ENCODE measurements at regions of chr11 and their contacts with region 1.

Region 1: DNA sequence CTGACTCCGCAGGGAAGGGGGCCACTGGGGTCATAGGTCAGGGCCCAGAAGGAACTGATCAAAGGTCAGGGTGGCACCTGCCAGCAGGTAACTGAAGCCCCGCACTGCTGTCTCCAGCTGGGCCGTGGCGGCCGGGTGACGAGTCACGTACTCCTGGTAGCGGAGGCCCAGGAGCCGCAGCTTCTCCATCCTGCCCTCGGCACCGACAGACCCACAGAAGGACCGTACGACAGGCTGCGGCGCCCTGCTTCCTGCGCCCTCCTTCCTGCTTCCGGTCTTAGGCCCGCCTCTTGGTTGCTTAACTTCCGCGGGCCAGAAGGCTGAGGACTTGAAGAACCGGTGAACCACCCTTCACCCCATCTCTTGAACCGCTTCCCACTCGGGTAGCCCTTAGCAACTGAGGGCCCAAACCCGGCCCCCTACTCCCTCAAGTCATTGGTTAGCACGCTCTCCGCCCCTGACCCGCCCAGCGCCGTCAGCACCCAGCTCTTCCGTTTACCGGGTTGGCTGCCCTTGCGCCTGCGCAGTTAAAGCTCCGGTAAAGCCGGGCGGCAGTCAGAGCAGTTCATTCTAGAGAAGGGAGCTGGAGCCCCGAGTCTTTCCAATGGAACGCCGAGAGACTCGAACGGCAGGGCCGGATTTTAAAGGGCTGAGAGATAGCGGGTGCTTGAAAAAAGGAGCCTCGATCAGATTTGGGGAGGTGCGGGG is at the start of gene PEX16:
- DNase-seq: peak; percentile 88 to 93
- H3K4me3 ChIP-seq: peak within 1 kb of the TSS; percentile 84 to 90 (median 88)
- H3K27ac ChIP-seq: peak within 1 kb of the TSS; percentile 64; the same call in 1 of the 2 replicates
- H3K4me1 ChIP-seq: peaks cover 12 to 28% (median 20%) of the 10 kb centered on the region in 4 experiments
- H3K27me3 ChIP-seq: peaks cover 0 to 9% (median 0%) of the 10 kb centered on the region in 4 experiments; a peak in 3 of 7 replicates
- CTCF ChIP-seq: no peak
- EP300 ChIP-seq: peak in 1 of 2 experiments; percentile 5; a peak in 1 of 3 replicates
- POLR2A ChIP-seq: peak in 1 of 2 experiments; percentile 63; a peak in 2 of 3 replicates
- RAD21 ChIP-seq: no peak
- total RNA-seq, gene PEX16: 29.2 and 29.4 TPM in 2 replicates

Region 2: GRCh38 chr11:45848654-45849081 is 69.1 kb before region 1 on chr11:
- CTCF ChIA-PET with region 1: no interaction called
- POLR2A ChIA-PET with region 1: no interaction called
- DNase-seq: no peak
- H3K4me3 ChIP-seq: peak overlapping the region in 2 of 4 experiments; percentile 58 to 90; a peak in 4 of 8 replicates
- H3K27ac ChIP-seq: no peak overlapping the region
- H3K4me1 ChIP-seq: peaks cover 2 to 24% (median 10%) of the 10 kb centered on the region in 4 experiments; a peak in 6 of 7 replicates
- H3K27me3 ChIP-seq: peaks cover 5 to 25% (median 12%) of the 10 kb centered on the region in 4 experiments; a peak in 6 of 7 replicates
- CTCF ChIP-seq: no peak
- EP300 ChIP-seq: no peak
- POLR2A ChIP-seq: no peak
- RAD21 ChIP-seq: no peak

Region 3: DNA sequence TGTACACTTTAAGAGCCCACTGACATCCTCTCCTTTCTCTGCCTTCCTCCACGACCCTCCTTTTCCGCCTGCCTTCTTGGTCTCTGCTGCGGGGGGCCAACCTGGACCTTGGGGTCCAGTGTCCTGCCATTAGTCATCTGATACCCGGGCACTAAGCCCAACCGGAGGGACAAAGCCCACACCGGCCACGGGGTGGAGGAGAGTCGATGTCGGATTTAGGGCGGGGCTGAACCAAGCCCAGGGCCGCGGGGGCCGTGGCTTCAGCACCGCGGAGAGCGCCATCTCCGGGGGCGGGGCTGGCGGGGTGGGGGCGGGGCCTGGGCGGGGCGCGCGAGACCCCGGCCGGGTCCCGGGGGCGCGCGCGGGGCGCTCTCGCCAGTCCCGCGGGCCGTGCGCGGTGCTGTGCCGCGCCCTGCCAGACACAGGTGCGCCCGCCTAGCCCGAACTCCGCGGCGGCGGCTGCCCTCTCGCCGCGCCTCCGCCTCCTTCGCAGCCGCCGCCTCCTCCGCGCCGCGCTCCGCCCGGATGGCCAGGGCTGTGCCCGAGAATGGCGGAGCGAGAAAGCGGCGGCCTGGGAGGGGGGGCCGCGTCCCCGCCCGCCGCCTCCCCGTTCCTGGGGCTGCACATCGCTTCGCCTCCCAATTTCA is 32.4 kb before region 1 on chr11 and contains the start of gene MAPK8IP1:
- CTCF ChIA-PET with region 1: interaction called, 5 read pairs
- POLR2A ChIA-PET with region 1: interaction called, 14 read pairs
- DNase-seq: peak; percentile 17 to 82
- H3K4me3 ChIP-seq: peak within 1 kb of the TSS; percentile 58 to 83 (median 71)
- H3K27ac ChIP-seq: no peak within 1 kb of the TSS
- H3K4me1 ChIP-seq: peaks cover 0 to 10% (median 5%) of the 10 kb centered on the region in 4 experiments; a peak in 5 of 7 replicates
- H3K27me3 ChIP-seq: no peaks in the 10 kb centered on the region; a peak in 2 of 7 replicates
- CTCF ChIP-seq: no peak; a peak in 1 of 4 replicates
- EP300 ChIP-seq: no peak
- POLR2A ChIP-seq: no peak
- RAD21 ChIP-seq: no peak; a peak in 1 of 4 replicates
- total RNA-seq, gene MAPK8IP1: 40.1 and 41.7 TPM in 2 replicates

Region 4: GRCh38 chr11:45899448-45900173 is 18.2 kb before region 1 on chr11:
- CTCF ChIA-PET with region 1: interaction called, 7 read pairs
- POLR2A ChIA-PET with region 1: interaction called, 36 read pairs
- DNase-seq: peak; percentile 72 to 90
- H3K4me3 ChIP-seq: peak overlapping the region; percentile 50 to 66 (median 59); a peak in 7 of 8 replicates
- H3K27ac ChIP-seq: peak overlapping the region; percentile 81; the same call in 1 of the 2 replicates
- H3K4me1 ChIP-seq: peaks cover 0 to 28% (median 19%) of the 10 kb centered on the region in 4 experiments; a peak in 5 of 7 replicates
- H3K27me3 ChIP-seq: peaks cover 0 to 5% (median 2%) of the 10 kb centered on the region in 4 experiments; a peak in 1 of 7 replicates
- CTCF ChIP-seq: no peak
- EP300 ChIP-seq: peak in 1 of 2 experiments; percentile 98; a peak in 1 of 3 replicates
- POLR2A ChIP-seq: no peak
- RAD21 ChIP-seq: peak in 1 of 2 experiments; percentile 26; a peak in 2 of 4 replicates

Region 5: DNA sequence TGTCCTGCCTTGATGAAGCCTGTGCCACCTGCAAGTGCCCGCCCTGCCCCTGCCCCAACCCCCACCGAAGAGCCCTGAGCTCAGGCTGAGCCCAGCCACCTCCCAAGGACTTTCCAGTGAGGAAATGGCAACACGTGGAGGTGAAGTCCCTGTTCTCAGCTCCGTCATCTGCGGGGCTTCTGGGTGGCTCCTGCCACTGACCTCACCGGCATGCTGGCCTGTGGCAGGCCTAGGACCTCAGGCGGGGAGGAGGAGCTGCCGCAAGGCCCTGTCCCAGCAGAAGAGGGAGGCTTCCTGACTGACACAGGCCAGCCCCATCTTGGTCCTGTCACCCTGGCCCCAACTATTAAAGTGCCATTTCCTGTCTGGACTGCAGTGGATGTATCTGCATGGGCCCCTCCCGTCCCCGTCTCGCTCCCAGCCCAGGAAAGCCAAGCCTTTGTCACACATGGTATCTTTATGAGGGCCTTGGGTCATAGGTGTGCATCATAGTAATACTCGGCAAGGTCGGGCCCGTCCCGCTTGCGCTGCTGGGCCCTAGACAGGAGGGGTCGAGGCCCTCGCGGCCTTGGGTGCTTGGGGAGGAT is 11.6 kb before region 1 on chr11:
- CTCF ChIA-PET with region 1: no interaction called
- POLR2A ChIA-PET with region 1: interaction called, 36 read pairs
- DNase-seq: no peak
- H3K4me3 ChIP-seq: no peak overlapping the region
- H3K27ac ChIP-seq: no peak overlapping the region
- H3K4me1 ChIP-seq: peaks cover 0 to under 1% (median 0%) of the 10 kb centered on the region in 4 experiments; a peak in 1 of 7 replicates
- H3K27me3 ChIP-seq: no peaks in the 10 kb centered on the region
- CTCF ChIP-seq: no peak
- EP300 ChIP-seq: no peak
- POLR2A ChIP-seq: no peak
- RAD21 ChIP-seq: no peak

Region 6: GRCh38 chr11:45930031-45930794 is 12.4 kb after region 1 on chr11:
- CTCF ChIA-PET with region 1: interaction called, 4 read pairs
- POLR2A ChIA-PET with region 1: interaction called, 115 read pairs
- DNase-seq: no peak
- H3K4me3 ChIP-seq: no peak overlapping the region
- H3K27ac ChIP-seq: no peak overlapping the region
- H3K4me1 ChIP-seq: no peaks in the 10 kb centered on the region
- H3K27me3 ChIP-seq: no peaks in the 10 kb centered on the region
- CTCF ChIP-seq: no peak
- EP300 ChIP-seq: no peak
- POLR2A ChIP-seq: no peak
- RAD21 ChIP-seq: peak; percentile 6 to 35; a peak in 2 of 4 replicates

Region 7: GRCh38 chr11:45982656-45983470 is 65.1 kb after region 1 on chr11:
- CTCF ChIA-PET with region 1: no interaction called
- POLR2A ChIA-PET with region 1: interaction called, 12 read pairs
- DNase-seq: peak; percentile 60 to 84
- H3K4me3 ChIP-seq: peak overlapping the region in 1 of 4 experiments; percentile 40; a peak in 4 of 8 replicates
- H3K27ac ChIP-seq: peak overlapping the region; percentile 58; the same call in 1 of the 2 replicates
- H3K4me1 ChIP-seq: peaks cover 5 to 9% (median 9%) of the 10 kb centered on the region in 4 experiments; a peak in 5 of 7 replicates
- H3K27me3 ChIP-seq: no peaks in the 10 kb centered on the region
- CTCF ChIP-seq: no peak
- EP300 ChIP-seq: no peak
- POLR2A ChIP-seq: no peak
- RAD21 ChIP-seq: no peak

Region 8: DNA sequence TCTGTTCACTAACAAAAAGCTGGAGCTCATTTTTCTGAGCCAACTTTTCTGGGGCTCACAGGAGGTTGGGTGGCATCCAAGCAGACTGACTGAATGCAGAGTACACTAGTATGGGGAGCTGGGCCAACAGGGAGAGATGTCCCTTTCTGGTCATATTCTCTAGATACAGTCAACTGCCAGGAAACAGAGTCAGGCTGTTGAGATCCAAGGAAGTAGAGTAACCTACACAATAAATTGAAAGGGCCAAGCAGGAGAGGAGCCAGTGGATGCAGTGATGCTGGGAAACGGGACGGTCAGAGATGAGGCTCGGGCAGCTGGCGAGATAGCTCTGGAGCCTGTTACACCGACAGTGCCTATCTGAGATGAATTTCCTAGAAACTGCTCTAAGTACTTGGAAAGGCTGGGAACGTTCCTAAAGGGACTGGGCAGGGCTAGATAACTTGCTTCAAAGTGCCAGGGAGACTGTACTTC is 75.8 kb after region 1 on chr11:
- CTCF ChIA-PET with region 1: no interaction called
- POLR2A ChIA-PET with region 1: interaction called, 13 read pairs
- DNase-seq: no peak
- H3K4me3 ChIP-seq: no peak overlapping the region
- H3K27ac ChIP-seq: no peak overlapping the region
- H3K4me1 ChIP-seq: peaks cover 18 to 38% (median 29%) of the 10 kb centered on the region in 4 experiments; a peak in 6 of 7 replicates
- H3K27me3 ChIP-seq: no peaks in the 10 kb centered on the region
- CTCF ChIP-seq: no peak
- EP300 ChIP-seq: no peak
- POLR2A ChIP-seq: no peak
- RAD21 ChIP-seq: no peak

Measured in H1 (cell line).